ENCODE measurements at regions of chr11 and their contacts with region 1.

Region 1: GRCh38 chr11:84642501-84642900 is 984.6 kb downstream of the DLG2 start:
- DNase-seq: no peak
- ATAC-seq: no peak
- H3K4me3 ChIP-seq: no peak overlapping the region
- H3K27ac ChIP-seq: no peak overlapping the region
- H3K4me1 ChIP-seq: no peaks in the 10 kb centered on the region
- H3K27me3 ChIP-seq: no peaks in the 10 kb centered on the region
- CTCF ChIP-seq: no peak

Region 2: DNA sequence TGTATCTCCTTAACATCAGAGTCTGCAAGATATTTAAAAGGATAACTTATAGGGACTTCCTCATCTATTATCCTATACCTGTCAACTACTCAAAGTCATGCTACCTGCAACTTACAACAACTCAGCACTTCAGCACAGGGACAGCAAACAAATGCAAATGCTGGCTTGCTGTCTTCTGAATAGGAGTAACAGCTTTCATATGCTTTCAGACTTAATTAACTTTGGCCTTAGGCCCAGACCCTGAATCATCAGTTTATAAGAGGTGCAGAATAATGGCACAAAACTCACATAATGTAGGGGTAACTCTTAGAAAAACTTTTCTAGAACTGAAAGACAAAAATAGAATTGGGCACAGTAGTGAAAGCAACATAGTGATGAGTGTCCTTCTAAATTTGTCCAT is 31.3 kb after region 1 on chr11:
- intact Hi-C with region 1: loop called in 1 of 10 experiments (anchors 1 kb)
- DNase-seq: no peak
- ATAC-seq: no peak
- H3K4me3 ChIP-seq: no peak overlapping the region
- H3K27ac ChIP-seq: no peak overlapping the region
- H3K4me1 ChIP-seq: peaks cover 0 to 6% (median 0%) of the 10 kb centered on the region in 9 donors
- H3K27me3 ChIP-seq: no peaks in the 10 kb centered on the region
- CTCF ChIP-seq: no peak